AG04450 (cell line): ENCODE measurements at regions of chr11 and their contacts with region 1.

Region 1: DNA sequence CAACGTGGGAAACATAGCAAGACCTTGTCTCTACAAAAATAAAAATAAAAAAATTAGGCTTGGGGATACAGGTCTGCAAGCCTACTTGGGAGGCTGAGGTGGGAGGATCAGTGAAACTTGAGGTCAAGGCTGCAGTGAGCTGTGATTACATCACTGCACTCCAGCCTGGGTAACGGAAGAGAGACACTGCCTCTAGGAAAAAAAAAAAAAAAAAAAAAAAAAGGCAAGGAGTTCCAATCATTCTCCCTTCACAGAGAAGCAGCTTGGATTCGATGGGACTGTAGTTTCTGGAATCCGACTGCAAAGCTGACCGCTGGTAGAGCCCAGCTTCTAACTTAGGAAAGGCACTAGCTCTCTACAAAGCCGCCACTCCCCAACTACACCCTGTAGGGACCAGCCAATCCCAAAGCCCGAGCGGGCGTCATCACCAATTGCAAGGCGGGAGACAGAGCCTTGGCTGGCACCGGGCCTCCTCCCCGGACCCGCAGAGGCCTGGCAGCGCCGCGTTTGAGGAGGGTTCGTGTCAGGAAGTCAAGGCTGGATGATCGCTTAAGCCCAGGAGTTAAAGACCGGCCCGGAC is 699 bp upstream of the DDB2 start:
- DNase-seq: no peak
- H3K4me3 ChIP-seq: peak overlapping the region; percentile 80
- H3K27ac ChIP-seq: peak overlapping the region; percentile 68
- H3K27me3 ChIP-seq: no peaks in the 10 kb centered on the region
- CTCF ChIP-seq: no peak

Region 2: GRCh38 chr11:47715082-47715669 is 501.1 kb after region 1 on chr11 and contains the start of gene AGBL2:
- CTCF ChIA-PET with region 1: no interaction called
- POLR2A ChIA-PET with region 1: interaction called, 14 read pairs
- DNase-seq: peak; percentile 21
- H3K4me3 ChIP-seq: peak within 1 kb of the TSS; percentile 85
- H3K27ac ChIP-seq: peak within 1 kb of the TSS; percentile 12
- H3K27me3 ChIP-seq: no peaks in the 10 kb centered on the region
- CTCF ChIP-seq: no peak
- polyA plus RNA-seq, gene AGBL2: 2.0 and 2.2 TPM in 2 replicates